Astrocyte of the cerebellum (primary cell): ENCODE measurements at regions of chr22 and their contacts with region 1.

Region 1: DNA sequence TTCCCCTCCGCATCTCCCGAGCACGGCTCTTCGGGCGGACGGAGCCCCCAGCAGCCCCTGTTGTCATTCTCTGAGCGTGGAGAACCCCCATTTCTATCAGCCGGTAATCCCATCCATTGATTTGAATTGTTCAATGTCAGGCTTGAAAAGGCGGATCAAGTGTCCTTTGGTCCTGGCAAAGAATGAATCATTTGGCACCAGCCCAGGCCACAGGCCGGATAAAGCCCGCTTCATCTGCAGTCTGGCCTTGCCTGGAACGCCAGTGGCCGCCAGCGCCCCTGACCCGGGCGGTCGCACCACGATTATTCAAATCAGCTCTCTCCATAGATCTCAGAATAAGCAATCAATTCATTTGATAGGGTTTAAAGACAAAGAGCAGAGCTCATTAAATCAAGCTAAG is 188.9 kb downstream of the BRD1 start:
- DNase-seq: peak; percentile 8
- H3K4me3 ChIP-seq: no peak overlapping the region
- CTCF ChIP-seq: no peak

Region 2: GRCh38 chr22:49592780-49593501 is 45.8 kb before region 1 on chr22:
- in situ Hi-C with region 1: loop called (anchors 5 kb)
- DNase-seq: no peak
- H3K4me3 ChIP-seq: no peak overlapping the region
- CTCF ChIP-seq: no peak